ENCODE measurements at regions of chr20 and their contacts with region 1.

Region 1: DNA sequence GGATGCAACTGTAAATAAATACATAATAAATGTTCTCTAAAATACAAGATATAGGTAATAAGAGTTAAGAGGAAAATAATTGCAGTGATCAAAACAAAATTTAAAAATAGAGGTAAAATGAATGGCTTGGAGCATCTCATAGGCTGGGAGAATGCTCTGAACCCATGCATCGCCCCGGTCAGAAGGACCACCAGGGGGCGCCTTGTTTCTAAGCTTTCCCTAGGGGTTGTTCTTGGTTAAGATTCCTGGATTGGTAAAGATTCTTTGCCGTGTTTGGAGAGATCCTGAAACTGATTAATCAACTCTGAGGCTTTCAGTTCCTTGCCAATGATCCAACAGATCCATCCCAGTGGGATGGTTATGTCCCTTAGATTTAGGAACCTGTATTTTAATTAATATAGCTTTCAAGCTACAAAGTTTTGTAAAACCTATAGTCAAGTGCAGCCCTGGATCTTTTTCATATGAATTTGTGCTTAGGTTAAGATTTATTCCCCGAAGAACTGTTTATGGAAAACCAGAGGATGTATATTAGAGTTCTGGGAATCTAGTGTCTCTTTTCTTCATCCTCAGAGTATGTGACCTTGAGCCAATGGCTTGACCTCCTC is 45.3 kb upstream of the PRELID3B start:
- DNase-seq: peak; percentile 75 to 86 (median 82)
- ATAC-seq: peak in 3 of 4 donors; percentile 75 to 83 (median 81)
- H3K4me3 ChIP-seq: no peak overlapping the region
- H3K27ac ChIP-seq: no peak overlapping the region
- H3K4me1 ChIP-seq: peaks cover 0 to 9% (median 3%) of the 10 kb centered on the region in 12 donors
- H3K27me3 ChIP-seq: peaks cover 0 to 4% (median 0%) of the 10 kb centered on the region in 9 donors
- CTCF ChIP-seq: peak; percentile 85 to 98 (median 94)
- POLR2A ChIP-seq: no peak

Region 2: GRCh38 chr20:59013959-59014608 is 73.8 kb before region 1 on chr20:
- intact Hi-C with region 1: no loop called
- DNase-seq: no peak
- ATAC-seq: peak in 1 of 4 donors; percentile 16
- H3K4me3 ChIP-seq: no peak overlapping the region
- H3K27ac ChIP-seq: peak overlapping the region in 5 of 12 donors; percentile 4 to 72 (median 29)
- H3K4me1 ChIP-seq: peaks cover 0 to 60% (median 31%) of the 10 kb centered on the region in 12 donors
- H3K27me3 ChIP-seq: no peaks in the 10 kb centered on the region
- CTCF ChIP-seq: no peak
- POLR2A ChIP-seq: no peak

Region 3: DNA sequence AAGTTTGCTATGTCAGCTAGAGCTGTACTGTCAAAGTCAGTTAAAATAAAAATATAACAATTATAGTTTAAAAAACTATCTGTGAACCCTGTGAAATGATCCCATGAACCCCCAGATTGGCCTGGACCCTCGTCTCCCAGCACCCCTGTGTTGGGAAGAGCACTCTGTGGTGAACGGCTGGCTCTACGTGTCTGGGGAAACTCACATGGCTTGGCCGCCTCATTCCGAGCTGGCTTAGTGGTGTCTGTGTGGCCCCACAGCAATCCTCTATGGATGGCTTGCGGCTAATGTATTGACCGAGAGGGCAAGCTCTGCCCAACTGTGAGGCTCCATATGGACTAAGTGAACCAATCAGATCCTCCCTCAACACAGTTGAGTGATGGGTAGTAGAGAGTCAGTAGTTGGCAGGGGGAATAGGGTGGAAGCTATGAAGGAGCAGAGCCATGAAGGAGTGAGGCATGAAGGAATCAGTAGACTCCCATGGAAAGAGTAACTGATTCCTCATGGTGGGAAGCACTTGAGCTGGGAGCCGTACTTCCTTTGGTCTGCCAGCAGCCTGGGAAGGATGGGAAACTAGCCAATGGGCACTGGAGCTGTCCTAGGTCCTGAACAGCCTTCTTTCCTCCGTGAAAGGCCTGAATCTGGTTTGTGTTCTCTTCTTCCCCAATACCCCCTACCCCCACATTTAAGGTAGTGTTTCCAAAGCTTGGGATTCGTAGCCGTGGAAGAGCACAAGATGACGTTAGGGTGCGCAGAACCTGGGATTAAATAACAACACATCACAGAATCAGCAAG is 54.1 kb after region 1 on chr20:
- intact Hi-C with region 1: loop called in 1 of 10 experiments (anchors 5 kb)
- DNase-seq: no peak
- ATAC-seq: no peak
- H3K4me3 ChIP-seq: no peak overlapping the region
- H3K27ac ChIP-seq: no peak overlapping the region
- H3K4me1 ChIP-seq: peaks cover 4 to 23% (median 14%) of the 10 kb centered on the region in 12 donors
- H3K27me3 ChIP-seq: no peaks in the 10 kb centered on the region
- CTCF ChIP-seq: no peak
- POLR2A ChIP-seq: no peak

Region 4: GRCh38 chr20:59170406-59171349 is 82.7 kb after region 1 on chr20:
- intact Hi-C with region 1: no loop called
- DNase-seq: no peak
- ATAC-seq: no peak
- H3K4me3 ChIP-seq: no peak overlapping the region
- H3K27ac ChIP-seq: no peak overlapping the region
- H3K4me1 ChIP-seq: peaks cover 0 to 16% (median under 1%) of the 10 kb centered on the region in 12 donors
- H3K27me3 ChIP-seq: peaks cover 0 to 4% (median 0%) of the 10 kb centered on the region in 9 donors
- CTCF ChIP-seq: no peak
- POLR2A ChIP-seq: no peak

Region 5: DNA sequence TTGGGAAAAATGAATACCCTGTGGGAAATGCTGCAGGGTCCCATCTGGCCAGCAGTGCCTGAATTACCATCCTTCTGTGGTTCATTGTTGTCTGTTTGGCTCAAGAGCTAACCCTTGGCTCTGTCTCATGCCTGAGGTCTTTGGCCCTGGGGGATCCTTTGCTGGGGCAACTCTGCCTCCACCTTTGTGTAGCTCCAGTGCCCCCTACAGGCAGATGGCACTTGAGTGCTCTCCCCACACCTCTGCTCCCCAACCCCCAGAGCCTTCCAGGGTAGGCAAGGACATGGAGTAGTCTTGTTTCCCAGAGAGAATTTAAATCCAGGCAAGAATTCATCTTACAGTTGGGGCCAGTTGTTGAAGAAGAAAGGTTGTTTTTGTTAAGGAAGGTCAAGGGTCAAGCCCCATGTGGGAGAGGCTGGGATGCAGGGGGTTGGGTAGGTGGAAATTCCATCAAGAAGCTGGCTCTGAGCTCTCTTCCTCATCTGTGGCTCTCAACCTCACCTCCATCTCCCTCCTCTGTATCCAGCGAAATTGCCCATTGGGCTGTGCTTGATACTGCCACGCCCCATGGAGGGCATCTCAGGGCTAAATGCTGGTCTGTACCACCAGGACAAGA is 119.9 kb after region 1 on chr20:
- intact Hi-C with region 1: loop called in 9 of 10 experiments (anchors 1 to 5 kb)
- DNase-seq: peak; percentile 46 to 75 (median 60)
- ATAC-seq: peak; percentile 55 to 85 (median 80)
- H3K4me3 ChIP-seq: no peak overlapping the region
- H3K27ac ChIP-seq: no peak overlapping the region
- H3K4me1 ChIP-seq: peaks cover 0 to 36% (median 6%) of the 10 kb centered on the region in 12 donors
- H3K27me3 ChIP-seq: peaks cover 0 to 26% (median 0%) of the 10 kb centered on the region in 9 donors
- CTCF ChIP-seq: peak; percentile 40 to 70 (median 58)
- POLR2A ChIP-seq: no peak

Region 6: DNA sequence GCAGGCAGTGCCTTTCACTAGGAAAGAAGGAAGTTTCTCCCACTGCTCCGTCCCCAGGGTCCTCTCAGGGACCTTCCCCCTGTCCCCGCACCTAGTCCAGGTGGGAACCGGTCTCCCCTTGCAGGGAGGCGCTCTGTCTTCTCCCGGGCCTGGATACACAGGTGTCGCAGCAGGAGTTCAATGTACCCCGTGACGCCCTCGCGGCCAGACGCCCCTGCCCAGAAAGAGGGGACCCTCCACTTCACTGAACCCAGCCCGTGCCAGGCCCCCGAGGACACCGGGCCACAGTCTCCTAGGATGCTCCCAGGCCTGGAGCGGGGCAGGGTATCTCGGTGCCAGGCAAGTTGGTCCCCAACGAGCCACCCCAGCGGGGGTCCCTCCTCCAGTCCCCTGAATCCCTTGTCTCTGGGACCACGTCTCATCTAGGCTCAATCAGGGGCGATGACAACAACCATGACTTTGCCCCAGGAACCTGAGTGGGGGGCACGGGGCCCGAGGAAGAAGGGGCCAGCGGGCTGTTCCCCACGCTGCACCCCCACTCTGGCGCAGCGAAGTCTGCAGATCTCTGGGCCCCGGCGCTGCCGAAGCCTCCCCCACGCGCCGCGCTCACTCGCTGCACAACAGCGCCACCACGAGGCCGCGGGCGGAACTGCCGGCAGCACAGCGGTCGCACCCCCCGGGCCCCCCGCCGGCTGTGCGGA is 315.5 kb after region 1 on chr20:
- intact Hi-C with region 1: loop called in 5 of 10 experiments (anchors 5 to 10 kb)
- DNase-seq: peak in 4 of 5 donors; percentile 29 to 75 (median 40)
- ATAC-seq: peak in 3 of 4 donors; percentile 33 to 70 (median 56)
- H3K4me3 ChIP-seq: peak overlapping the region in 4 of 12 donors; percentile 3 to 11 (median 4)
- H3K27ac ChIP-seq: no peak overlapping the region
- H3K4me1 ChIP-seq: peaks cover 0 to 18% (median 7%) of the 10 kb centered on the region in 12 donors
- H3K27me3 ChIP-seq: peaks cover 9 to 81% (median 47%) of the 10 kb centered on the region in 9 donors
- CTCF ChIP-seq: peak; percentile 88 to 98 (median 94)
- POLR2A ChIP-seq: no peak

Region 7: DNA sequence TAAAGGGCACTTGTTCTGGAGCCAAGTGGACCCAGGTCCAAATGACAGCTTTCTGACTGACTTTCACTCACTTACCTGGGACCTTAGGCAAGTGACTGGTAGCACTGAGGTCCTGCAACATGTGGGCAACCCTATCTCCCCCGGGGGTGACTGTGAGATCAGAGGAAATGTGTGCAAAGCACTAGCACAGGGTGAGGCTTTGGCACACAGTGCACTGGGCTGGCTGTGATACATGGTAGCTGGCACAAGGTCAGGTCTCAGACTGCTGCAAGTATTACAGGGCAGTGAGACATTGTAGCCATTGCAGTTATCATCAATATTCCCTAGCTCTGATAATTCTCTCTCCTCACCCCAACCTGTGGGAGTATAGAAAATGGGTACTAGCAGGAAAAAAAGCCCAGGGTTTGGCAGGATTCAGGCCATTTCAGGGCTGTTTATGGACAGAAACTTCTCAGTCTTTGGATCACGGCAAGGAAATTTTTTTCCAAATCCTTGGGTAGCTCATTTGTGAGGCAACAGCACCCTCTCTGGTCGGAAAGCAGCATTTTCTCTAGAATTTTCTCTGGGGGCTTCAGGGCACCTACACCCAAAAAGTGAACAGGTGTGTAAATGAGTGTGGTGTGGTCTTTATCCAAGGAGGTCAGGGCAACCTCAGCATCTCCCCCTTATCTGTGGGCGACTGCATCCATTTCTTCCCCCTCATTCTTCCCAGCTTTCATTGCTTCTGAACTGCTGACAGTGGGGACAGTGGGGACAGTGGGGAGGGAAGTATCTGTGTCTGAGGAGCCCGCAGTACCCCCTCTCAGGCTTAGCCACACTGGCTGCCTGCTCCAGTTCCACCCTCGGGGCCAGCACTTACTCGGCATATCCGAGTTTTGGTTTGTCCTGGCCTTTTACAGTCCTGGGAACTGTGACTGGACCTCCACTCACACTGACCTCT is 367.7 kb after region 1 on chr20:
- intact Hi-C with region 1: loop called in 2 of 10 experiments (anchors 10 kb)
- DNase-seq: peak in 1 of 5 donors; percentile 54
- ATAC-seq: peak in 3 of 4 donors; percentile 42 to 85 (median 69)
- H3K4me3 ChIP-seq: no peak overlapping the region
- H3K27ac ChIP-seq: no peak overlapping the region
- H3K4me1 ChIP-seq: peaks cover 0 to 6% (median 0%) of the 10 kb centered on the region in 12 donors
- H3K27me3 ChIP-seq: peaks cover 0 to 25% (median 0%) of the 10 kb centered on the region in 9 donors
- CTCF ChIP-seq: peak; percentile 34 to 66 (median 50)
- POLR2A ChIP-seq: no peak